Thyroid gland (tissue), 4 donors: ENCODE measurements at regions of chr7 and their contacts with region 1.

Region 1: GRCh38 chr7:123865517-123866117 is 20.6 kb downstream of the HYAL4 start:
- DNase-seq: peak; percentile 46 to 53
- H3K4me3 ChIP-seq: no peak overlapping the region
- H3K27ac ChIP-seq: no peak overlapping the region
- H3K4me1 ChIP-seq: no peaks in the 10 kb centered on the region
- H3K27me3 ChIP-seq: no peaks in the 10 kb centered on the region
- CTCF ChIP-seq: peak; percentile 60 to 84 (median 76)
- POLR2A ChIP-seq: no peak

Region 2: DNA sequence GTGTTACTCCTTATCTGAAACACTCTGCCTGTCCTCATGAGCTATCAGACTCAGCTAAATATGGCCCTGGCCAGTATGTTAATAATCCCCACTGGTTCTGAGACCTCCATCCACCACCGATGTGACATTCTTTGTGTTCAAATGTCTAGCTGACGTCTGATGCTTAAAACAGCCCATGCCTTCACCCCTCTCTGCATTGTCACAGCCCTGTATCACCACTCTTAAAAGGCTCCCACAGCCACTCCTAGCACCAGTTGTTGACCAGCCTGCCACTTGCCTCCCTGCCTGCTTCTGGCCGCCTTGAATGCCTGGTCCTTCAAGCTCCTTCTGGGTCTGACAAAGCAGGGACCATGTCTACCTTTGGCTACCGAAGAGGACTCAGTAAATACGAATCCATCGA is 210.0 kb before region 1 on chr7 and contains the start of gene LMOD2:
- intact Hi-C with region 1: no loop called
- DNase-seq: no peak
- H3K4me3 ChIP-seq: no peak within 1 kb of the TSS
- H3K27ac ChIP-seq: no peak within 1 kb of the TSS
- H3K4me1 ChIP-seq: no peaks in the 10 kb centered on the region
- H3K27me3 ChIP-seq: no peaks in the 10 kb centered on the region
- CTCF ChIP-seq: no peak
- POLR2A ChIP-seq: no peak
- total RNA-seq, gene LMOD2: not detected

Region 3: GRCh38 chr7:123682690-123683089 is 182.9 kb before region 1 on chr7:
- intact Hi-C with region 1: loop called (anchors 5 kb)
- DNase-seq: peak in 1 of 2 donors; percentile 9
- H3K4me3 ChIP-seq: no peak overlapping the region
- H3K27ac ChIP-seq: peak overlapping the region; percentile 64 to 75 (median 73)
- H3K4me1 ChIP-seq: peaks cover 13 to 16% of the 10 kb centered on the region in 2 donors
- H3K27me3 ChIP-seq: no peaks in the 10 kb centered on the region
- CTCF ChIP-seq: peak in 5 of 6 experiments; percentile 13 to 74 (median 55)
- POLR2A ChIP-seq: no peak

Region 4: DNA sequence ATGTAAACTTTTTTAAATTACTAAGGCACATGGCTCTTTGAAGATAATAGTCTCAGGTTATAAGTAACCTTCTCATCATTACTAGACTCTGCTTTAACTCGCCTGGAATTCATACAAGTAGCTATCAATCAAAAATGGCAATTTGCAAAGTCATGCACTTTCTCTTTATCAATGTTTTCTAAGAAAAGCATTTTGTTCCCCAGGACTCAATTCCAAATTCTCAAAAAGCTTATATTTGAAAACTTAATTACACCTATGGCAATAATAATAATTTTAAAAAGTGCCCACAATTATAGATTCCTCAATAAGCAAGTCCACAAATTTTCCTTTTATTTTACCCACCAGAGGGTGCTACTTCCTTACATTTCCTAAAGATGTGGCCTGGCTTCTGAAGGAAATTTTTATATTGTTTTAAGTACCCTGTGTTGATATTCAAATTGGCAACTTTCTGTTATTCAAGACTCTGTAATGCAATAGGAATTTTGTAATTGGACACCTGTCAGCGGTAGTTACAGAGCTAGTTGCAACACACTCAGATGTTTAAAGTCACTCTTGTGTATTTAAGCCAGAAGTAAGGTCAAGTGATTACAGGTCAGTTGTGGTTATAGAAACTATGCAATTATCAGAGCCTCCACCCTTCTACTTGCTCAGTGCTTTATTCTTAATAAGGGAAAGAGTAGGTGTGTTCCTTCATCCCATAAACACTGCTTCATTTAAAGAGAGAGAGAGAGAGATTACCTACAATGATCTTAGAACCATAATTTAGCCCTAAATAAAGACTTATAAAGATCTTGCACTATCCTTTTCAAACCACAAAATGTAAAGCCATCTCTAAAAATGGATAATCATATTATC is 67.7 kb before region 1 on chr7:
- intact Hi-C with region 1: loop called (anchors 10 kb)
- DNase-seq: no peak
- H3K4me3 ChIP-seq: no peak overlapping the region
- H3K27ac ChIP-seq: peak overlapping the region; percentile 42 to 89 (median 58)
- H3K4me1 ChIP-seq: peaks cover 10 to 14% of the 10 kb centered on the region in 2 donors
- H3K27me3 ChIP-seq: no peaks in the 10 kb centered on the region
- CTCF ChIP-seq: peak in 4 of 6 experiments; percentile 40 to 82 (median 68)
- POLR2A ChIP-seq: no peak

Region 5: GRCh38 chr7:123995617-123996326 is 130.2 kb after region 1 on chr7:
- intact Hi-C with region 1: no loop called
- DNase-seq: no peak
- H3K4me3 ChIP-seq: no peak overlapping the region
- H3K27ac ChIP-seq: no peak overlapping the region
- H3K4me1 ChIP-seq: no peaks in the 10 kb centered on the region
- H3K27me3 ChIP-seq: no peaks in the 10 kb centered on the region
- CTCF ChIP-seq: no peak
- POLR2A ChIP-seq: no peak